ENCODE measurements at regions of chr5 and their contacts with region 1.

Region 1: GRCh38 chr5:172777881-172778814 is 7.2 kb upstream of the DUSP1 start:
- DNase-seq: peak; percentile 31 to 41
- ATAC-seq: peak; percentile 46 to 61 (median 51)
- H3K4me3 ChIP-seq: peak overlapping the region; percentile 8
- H3K4me3 Mint-ChIP-seq: peak overlapping the region; percentile 45
- H3K27ac ChIP-seq: peak overlapping the region; percentile 97
- H3K27ac Mint-ChIP-seq: peak overlapping the region; percentile 97 to 98
- H3K4me1 ChIP-seq: peaks cover 46% of the 10 kb centered on the region
- H3K4me1 Mint-ChIP-seq: peaks cover 31 to 46% of the 10 kb centered on the region in 2 donors
- H3K27me3 ChIP-seq: no peaks in the 10 kb centered on the region
- H3K27me3 Mint-ChIP-seq: no peaks in the 10 kb centered on the region
- CTCF ChIP-seq: no peak

Region 2: DNA sequence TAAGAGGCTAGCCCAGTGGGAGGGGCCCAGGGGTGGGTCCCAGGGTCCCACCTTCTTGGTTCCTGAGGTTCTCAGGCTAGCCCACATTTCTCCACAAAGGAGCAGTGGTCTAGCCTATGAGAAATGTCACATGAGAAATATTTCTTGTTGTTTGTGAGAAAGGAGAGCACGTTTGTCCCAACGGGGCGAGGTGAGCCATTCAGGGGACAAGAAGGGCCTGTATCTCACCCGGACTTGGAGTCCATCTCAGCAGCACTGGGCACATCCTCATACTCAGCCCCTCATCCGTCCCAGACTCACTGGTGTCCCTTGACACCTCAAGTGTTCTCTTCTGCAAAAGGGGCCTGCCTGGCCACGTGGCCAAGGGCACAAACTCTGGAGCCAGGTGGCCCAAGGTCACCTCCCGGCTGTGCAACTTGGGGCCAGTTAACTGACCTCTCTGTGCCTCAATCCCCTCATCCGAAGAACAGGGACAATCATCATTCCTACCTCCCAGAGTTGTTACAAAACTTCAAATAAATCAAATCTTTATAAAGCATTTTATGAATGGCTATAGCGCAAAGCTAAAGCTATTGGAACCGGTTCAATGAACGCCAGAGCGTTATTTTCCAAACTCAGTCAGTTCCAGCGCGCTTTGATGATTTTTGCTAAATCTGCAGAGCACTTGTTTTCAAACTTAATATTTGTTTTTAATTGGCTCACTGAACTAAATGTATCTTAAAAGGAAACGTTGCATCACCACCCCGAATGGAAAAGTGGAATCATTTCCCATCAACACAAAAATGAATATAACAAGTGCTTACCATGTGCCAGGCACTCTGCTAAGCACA is 56.6 kb before region 1 on chr5:
- intact Hi-C with region 1: loop called (anchors 2 kb)
- DNase-seq: no peak
- ATAC-seq: peak; percentile 16 to 39 (median 24)
- H3K4me3 ChIP-seq: no peak overlapping the region
- H3K4me3 Mint-ChIP-seq: peak overlapping the region; percentile 83
- H3K27ac ChIP-seq: peak overlapping the region; percentile 17
- H3K27ac Mint-ChIP-seq: peak overlapping the region; percentile 65 to 76
- H3K4me1 ChIP-seq: peaks cover 40% of the 10 kb centered on the region
- H3K4me1 Mint-ChIP-seq: peaks cover 28 to 33% of the 10 kb centered on the region in 2 donors
- H3K27me3 ChIP-seq: peaks cover 21% of the 10 kb centered on the region
- H3K27me3 Mint-ChIP-seq: peaks cover 50 to 51% of the 10 kb centered on the region in 2 donors
- CTCF ChIP-seq: no peak

Region 3: DNA sequence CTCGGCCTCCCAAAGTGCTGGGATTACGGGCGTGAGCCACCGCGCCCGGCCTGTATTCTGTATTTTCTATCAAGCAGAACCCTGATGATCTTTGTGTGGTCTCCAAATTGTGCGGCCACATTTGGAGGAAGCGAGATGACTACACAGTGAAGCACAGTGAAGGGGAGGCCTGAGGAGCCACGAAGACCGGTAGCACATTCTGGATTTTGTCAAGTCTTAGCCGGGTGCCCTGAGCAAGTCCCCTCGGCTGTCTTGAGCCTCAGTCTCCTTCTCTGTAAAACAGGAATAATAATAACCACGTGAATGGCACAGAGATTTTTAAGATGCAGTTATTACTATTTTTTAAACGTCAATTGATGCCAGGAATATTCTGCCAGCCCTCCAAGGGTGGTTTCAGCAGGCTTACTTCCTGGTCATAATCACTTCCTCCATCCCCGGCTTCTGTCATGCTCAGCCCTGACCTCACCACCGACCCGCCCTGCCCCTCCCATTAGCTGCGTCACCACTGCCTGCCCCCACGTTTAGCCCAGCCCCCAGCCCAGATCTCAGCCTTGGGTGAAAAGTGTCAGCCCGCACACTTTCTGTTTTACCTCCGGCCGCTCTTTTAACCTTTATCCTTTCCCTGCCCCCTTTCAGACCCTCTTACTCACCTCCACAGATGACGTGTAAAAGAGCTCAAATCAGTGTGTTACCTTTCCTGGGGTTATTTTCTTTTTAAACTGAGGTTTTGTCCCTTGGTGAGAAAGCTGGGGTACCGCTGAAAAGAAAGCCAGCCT is 28.9 kb after region 1 on chr5:
- intact Hi-C with region 1: loop called (anchors 1 kb)
- DNase-seq: peak; percentile 77 to 90
- ATAC-seq: peak; percentile 97 to 99 (median 99)
- H3K4me3 ChIP-seq: peak overlapping the region; percentile 49
- H3K4me3 Mint-ChIP-seq: peak overlapping the region; percentile 80
- H3K27ac ChIP-seq: peak overlapping the region; percentile 91
- H3K27ac Mint-ChIP-seq: peak overlapping the region; percentile 81 to 93
- H3K4me1 ChIP-seq: peaks cover 21% of the 10 kb centered on the region
- H3K4me1 Mint-ChIP-seq: peaks cover 9 to 25% of the 10 kb centered on the region in 2 donors
- H3K27me3 ChIP-seq: no peaks in the 10 kb centered on the region
- H3K27me3 Mint-ChIP-seq: no peaks in the 10 kb centered on the region
- CTCF ChIP-seq: no peak

Region 4: DNA sequence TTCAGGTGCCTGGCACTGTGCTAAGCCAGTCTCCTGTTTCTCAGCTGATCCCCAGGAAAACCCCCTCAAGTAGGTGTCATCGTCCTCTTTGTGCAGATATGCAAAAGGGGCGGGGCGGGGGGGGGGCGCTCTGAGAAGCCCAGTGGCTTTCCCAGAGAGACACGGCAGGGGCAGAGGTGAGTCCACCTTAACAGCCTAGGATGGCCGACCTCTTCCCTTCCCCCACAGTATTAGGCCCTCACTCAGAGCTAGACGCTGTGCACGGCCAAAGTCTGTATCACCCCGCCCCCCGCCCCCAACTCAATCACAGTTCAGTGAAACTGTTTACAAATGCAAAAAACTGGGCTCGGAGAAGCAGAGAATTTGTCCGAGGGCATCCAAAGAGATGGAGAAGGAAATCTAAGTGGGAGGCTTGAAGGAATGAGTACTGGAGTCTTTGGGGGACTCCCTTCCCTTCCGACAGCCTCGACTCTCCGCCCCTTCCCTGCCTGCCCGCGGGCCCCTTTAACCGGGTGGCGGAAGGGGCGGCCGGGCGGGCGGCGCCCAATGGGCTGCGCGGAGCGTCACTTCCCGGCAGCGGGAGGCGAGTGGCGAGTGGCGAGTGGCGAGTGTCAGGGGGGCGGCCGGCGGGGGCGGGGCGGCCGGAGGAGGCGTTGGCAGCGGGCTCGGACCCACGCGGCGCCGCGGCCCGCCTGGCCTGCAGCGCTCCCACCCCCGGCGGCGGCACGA is 55.7 kb after region 1 on chr5 and contains the start of gene ERGIC1:
- intact Hi-C with region 1: loop called (anchors 2 kb)
- DNase-seq: peak; percentile 78 to 79
- ATAC-seq: peak; percentile 74 to 89 (median 87)
- H3K4me3 ChIP-seq: peak within 1 kb of the TSS; percentile 67
- H3K4me3 Mint-ChIP-seq: peak within 1 kb of the TSS; percentile 90
- H3K27ac ChIP-seq: peak within 1 kb of the TSS; percentile 90
- H3K27ac Mint-ChIP-seq: peak within 1 kb of the TSS; percentile 95 to 96
- H3K4me1 ChIP-seq: peaks cover 53% of the 10 kb centered on the region
- H3K4me1 Mint-ChIP-seq: peaks cover 37 to 48% of the 10 kb centered on the region in 2 donors
- H3K27me3 ChIP-seq: no peaks in the 10 kb centered on the region
- H3K27me3 Mint-ChIP-seq: no peaks in the 10 kb centered on the region
- CTCF ChIP-seq: no peak
- total RNA-seq, gene ERGIC1: 86.2 to 126 (median 121) TPM

Region 5: GRCh38 chr5:172926796-172927195 is 148.6 kb after region 1 on chr5:
- intact Hi-C with region 1: no loop called
- DNase-seq: no peak
- ATAC-seq: no peak
- H3K4me3 ChIP-seq: no peak overlapping the region
- H3K4me3 Mint-ChIP-seq: no peak overlapping the region
- H3K27ac ChIP-seq: no peak overlapping the region
- H3K27ac Mint-ChIP-seq: peak overlapping the region in 1 of 2 donors; percentile 67
- H3K4me1 ChIP-seq: no peaks in the 10 kb centered on the region
- H3K4me1 Mint-ChIP-seq: peaks cover 0 to 22% of the 10 kb centered on the region in 2 donors
- H3K27me3 ChIP-seq: no peaks in the 10 kb centered on the region
- H3K27me3 Mint-ChIP-seq: no peaks in the 10 kb centered on the region
- CTCF ChIP-seq: no peak

Measured in natural killer cell (primary cell).